Aorta (tissue), 5 donors: ENCODE measurements at regions of chr9 and their contacts with region 1.

Region 1: GRCh38 chr9:899440-900184 is 58.1 kb downstream of the DMRT1 start:
- DNase-seq: no peak
- ATAC-seq: no peak
- H3K4me3 ChIP-seq: no peak overlapping the region
- H3K27ac ChIP-seq: no peak overlapping the region
- H3K4me1 ChIP-seq: no peaks in the 10 kb centered on the region
- H3K27me3 ChIP-seq: no peaks in the 10 kb centered on the region

Region 2: DNA sequence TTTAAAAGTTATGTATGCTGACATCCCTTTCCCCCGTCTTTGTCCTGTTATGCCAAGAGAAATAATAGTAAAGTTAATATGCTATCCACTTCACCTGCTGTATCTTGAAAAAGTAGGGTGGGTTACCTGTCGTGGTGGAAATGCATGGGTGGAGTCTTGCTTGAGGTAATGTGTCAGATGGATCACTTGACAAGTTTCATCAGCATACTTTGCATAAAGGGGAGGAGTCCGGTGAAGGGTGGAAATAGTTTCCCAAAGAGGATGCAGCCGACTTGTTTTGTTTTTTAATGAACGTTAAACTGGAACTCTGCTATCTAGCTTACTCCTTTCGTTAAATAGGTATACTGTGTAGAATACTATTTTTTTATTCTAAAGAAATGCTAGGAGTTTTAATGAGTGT is 67.8 kb after region 1 on chr9:
- intact Hi-C with region 1: no loop called
- DNase-seq: no peak
- ATAC-seq: no peak
- H3K4me3 ChIP-seq: no peak overlapping the region
- H3K27ac ChIP-seq: no peak overlapping the region
- H3K4me1 ChIP-seq: no peaks in the 10 kb centered on the region
- H3K27me3 ChIP-seq: no peaks in the 10 kb centered on the region

Region 3: GRCh38 chr9:1009101-1009707 is 109.6 kb after region 1 on chr9:
- intact Hi-C with region 1: loop called in 1 of 2 experiments (anchors 5 kb)
- DNase-seq: peak; percentile 82 to 93
- ATAC-seq: peak; percentile 91
- H3K4me3 ChIP-seq: no peak overlapping the region
- H3K27ac ChIP-seq: no peak overlapping the region
- H3K4me1 ChIP-seq: no peaks in the 10 kb centered on the region
- H3K27me3 ChIP-seq: no peaks in the 10 kb centered on the region

Region 4: GRCh38 chr9:1031951-1032601 is 132.5 kb after region 1 on chr9:
- intact Hi-C with region 1: no loop called
- DNase-seq: no peak
- ATAC-seq: no peak
- H3K4me3 ChIP-seq: no peak overlapping the region
- H3K27ac ChIP-seq: no peak overlapping the region
- H3K4me1 ChIP-seq: no peaks in the 10 kb centered on the region
- H3K27me3 ChIP-seq: no peaks in the 10 kb centered on the region

Region 5: DNA sequence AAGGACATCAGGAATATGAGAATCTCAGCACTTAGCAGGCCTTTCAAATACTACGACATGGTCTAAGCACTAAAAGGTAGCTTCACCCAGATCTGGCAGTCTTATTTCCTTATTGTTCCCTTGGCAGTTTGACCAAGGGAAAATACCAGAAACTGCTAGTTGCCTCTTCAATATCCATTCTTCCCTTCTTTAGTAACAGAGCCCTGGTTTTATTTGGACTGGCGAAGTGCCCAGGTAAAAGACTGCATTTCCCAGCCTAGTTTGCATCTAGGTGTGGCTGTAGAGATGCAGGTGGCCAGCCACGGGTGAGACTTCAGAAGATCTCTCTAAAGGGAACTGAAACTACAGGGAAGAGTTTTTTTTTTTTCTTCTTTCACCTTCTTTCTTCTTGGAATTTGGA is 172.1 kb after region 1 on chr9:
- intact Hi-C with region 1: no loop called
- DNase-seq: no peak
- ATAC-seq: no peak
- H3K4me3 ChIP-seq: no peak overlapping the region
- H3K27ac ChIP-seq: no peak overlapping the region
- H3K4me1 ChIP-seq: no peaks in the 10 kb centered on the region
- H3K27me3 ChIP-seq: no peaks in the 10 kb centered on the region